AG04449 (cell line): ENCODE measurements at regions of chr7 and their contacts with region 1.

Region 1: GRCh38 chr7:18590744-18591340 is 95.3 kb downstream of the HDAC9 start:
- DNase-seq: peak; percentile 19
- H3K4me3 ChIP-seq: no peak overlapping the region
- CTCF ChIP-seq: peak; percentile 49

Region 2: DNA sequence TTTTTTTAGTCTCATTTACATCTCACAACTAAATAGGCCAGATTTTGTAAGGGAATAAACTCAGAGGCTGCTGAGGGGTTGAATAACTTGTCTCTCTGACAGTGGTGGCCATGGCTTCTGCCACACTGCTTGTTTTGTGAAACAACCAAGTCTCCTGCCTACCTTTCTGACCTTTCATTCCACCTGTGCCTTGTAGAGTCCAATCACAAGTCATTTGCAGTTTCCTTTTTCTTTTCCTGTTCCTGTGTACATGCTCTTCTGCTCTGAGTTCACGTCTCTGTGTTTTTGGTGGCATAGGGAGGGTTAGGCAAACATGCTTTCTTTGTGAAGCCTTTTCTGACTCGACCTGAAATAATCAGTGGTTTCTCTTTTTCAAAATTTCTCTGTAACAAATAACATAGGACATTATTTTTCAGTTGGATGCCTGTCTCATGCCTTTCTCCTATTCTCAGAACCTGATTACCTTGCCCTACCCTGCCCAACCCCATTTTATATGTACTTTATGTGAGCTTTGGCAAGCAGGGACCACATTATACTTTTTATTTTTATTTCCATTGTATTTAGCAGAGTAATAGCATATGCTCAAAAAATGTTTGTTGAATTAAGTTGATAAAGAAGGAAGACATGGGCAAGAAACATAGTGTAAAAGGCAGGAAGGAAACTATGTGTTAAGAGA is 13.6 kb before region 1 on chr7:
- CTCF ChIA-PET with region 1: interaction called, 22 read pairs
- POLR2A ChIA-PET with region 1: no interaction called
- DNase-seq: no peak
- H3K4me3 ChIP-seq: no peak overlapping the region
- CTCF ChIP-seq: no peak

Region 3: GRCh38 chr7:18666107-18666728 is 75.4 kb after region 1 on chr7:
- CTCF ChIA-PET with region 1: interaction called, 29 read pairs
- POLR2A ChIA-PET with region 1: no interaction called
- DNase-seq: peak; percentile 16
- H3K4me3 ChIP-seq: no peak overlapping the region
- CTCF ChIP-seq: peak; percentile 92

Region 4: GRCh38 chr7:19491821-19492452 is 901.1 kb after region 1 on chr7:
- CTCF ChIA-PET with region 1: interaction called, 17 read pairs
- POLR2A ChIA-PET with region 1: no interaction called
- DNase-seq: peak; percentile 5
- H3K4me3 ChIP-seq: no peak overlapping the region
- CTCF ChIP-seq: peak; percentile 47